Right ventricle myocardium inferior (tissue), 1 donor: ENCODE measurements at regions of chr12 and their contacts with region 1.

Region 1: GRCh38 chr12:122123051-122123760 is 44.6 kb downstream of the MLXIP start:
- DNase-seq: no peak
- ATAC-seq: peak; percentile 43

Region 2: GRCh38 chr12:121917979-121918678 is 205.1 kb before region 1 on chr12 and contains the start of gene CFAP251:
- intact Hi-C with region 1: loop called (anchors 5 kb)
- DNase-seq: peak; percentile 99
- ATAC-seq: peak; percentile 89
- total RNA-seq, gene CFAP251: 1.3 TPM

Region 3: GRCh38 chr12:121955258-121956235 is 167.7 kb before region 1 on chr12:
- intact Hi-C with region 1: loop called (anchors 10 kb)
- DNase-seq: no peak
- ATAC-seq: no peak

Region 4: GRCh38 chr12:122051231-122051876 is 71.9 kb before region 1 on chr12:
- intact Hi-C with region 1: loop called (anchors 1 kb)
- DNase-seq: no peak
- ATAC-seq: peak; percentile 78

Region 5: GRCh38 chr12:122078141-122079032 is 44.8 kb before region 1 on chr12 and contains the start of gene MLXIP:
- intact Hi-C with region 1: loop called (anchors 2 kb)
- DNase-seq: peak; percentile 97
- ATAC-seq: peak; percentile 85
- total RNA-seq, gene MLXIP: 25.7 TPM

Region 6: DNA sequence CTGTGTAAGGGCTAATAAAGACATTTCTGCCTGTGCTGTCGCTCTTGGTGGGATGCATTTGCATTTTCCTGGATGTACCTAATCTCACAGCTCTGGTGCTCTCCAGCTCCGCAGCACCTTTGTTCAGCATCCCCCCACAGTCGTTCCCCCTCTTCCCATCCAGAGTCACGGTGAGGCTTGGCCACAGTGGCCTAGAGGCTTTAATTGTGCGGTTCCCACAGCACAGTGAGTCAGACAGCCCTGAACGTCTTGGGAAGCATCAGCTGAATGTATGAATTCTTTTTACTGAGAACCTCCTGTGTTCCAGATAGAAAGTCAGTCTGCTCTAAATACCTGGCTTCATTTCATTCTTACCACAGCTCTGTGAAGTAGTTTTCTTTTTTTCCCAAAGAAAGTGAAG is 15.9 kb before region 1 on chr12:
- intact Hi-C with region 1: no loop called
- DNase-seq: no peak
- ATAC-seq: no peak